Ascending aorta (tissue), 2 donors: ENCODE measurements at regions of chr1 and their contacts with region 1.

Region 1: DNA sequence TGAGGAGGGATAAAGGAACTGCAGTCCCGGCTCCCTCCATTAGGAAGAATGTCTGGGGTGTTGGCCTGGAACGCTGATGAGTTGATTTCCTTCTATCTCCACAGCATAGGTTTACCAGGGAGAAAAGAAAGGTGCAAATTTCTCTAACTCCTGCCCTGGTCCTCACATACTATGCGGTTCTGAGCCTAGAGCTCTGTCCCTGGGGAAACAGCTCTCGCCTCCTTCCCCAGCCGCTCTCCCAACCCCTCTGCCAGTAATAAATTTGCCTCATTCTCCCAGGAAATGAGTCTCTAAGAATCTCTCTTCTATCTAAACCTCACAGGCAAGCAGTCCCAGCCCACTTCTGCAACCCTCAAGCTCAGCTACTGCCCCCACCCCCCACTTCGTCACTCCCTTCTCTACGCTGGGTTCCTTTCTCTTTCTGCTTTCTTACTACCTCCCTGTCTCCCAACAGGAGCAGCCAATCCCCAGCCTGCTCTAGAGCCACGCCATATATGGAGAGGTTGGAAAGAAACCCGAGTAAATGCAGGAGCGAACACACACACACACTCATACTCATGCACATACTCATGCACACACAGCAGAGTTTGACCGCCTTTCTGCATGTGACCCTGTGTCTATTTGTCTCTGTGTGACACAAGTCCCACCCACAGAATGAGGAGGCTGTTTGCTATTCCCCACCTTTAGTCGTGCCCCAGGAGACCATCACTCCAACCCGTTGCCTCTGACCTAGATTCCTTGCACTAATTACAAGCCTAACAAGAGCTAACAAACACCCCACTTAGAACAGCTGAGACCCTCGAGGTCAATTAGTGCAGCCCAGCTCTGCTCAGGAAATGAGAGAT is 13.4 kb downstream of the PLEKHO1 start:
- DNase-seq: peak; percentile 93 to 97
- H3K4me3 ChIP-seq: peak overlapping the region; percentile 39 to 57
- H3K27ac ChIP-seq: peak overlapping the region; percentile 94 to 98
- H3K4me1 ChIP-seq: peaks cover 18 to 29% of the 10 kb centered on the region in 2 donors
- H3K27me3 ChIP-seq: no peaks in the 10 kb centered on the region
- CTCF ChIP-seq: no peak

Region 2: GRCh38 chr1:150067184-150068036 is 95.7 kb before region 1 on chr1 and contains the start of gene VPS45:
- intact Hi-C with region 1: loop called (anchors 2 kb)
- DNase-seq: peak; percentile 64 to 96
- H3K4me3 ChIP-seq: peak within 1 kb of the TSS; percentile 61 to 67
- H3K27ac ChIP-seq: peak within 1 kb of the TSS; percentile 83 to 90
- H3K4me1 ChIP-seq: peaks cover 4 to 18% of the 10 kb centered on the region in 2 donors
- H3K27me3 ChIP-seq: no peaks in the 10 kb centered on the region
- CTCF ChIP-seq: peak in 1 of 3 experiments; percentile 5
- total RNA-seq, gene VPS45: 11.3 TPM

Region 3: DNA sequence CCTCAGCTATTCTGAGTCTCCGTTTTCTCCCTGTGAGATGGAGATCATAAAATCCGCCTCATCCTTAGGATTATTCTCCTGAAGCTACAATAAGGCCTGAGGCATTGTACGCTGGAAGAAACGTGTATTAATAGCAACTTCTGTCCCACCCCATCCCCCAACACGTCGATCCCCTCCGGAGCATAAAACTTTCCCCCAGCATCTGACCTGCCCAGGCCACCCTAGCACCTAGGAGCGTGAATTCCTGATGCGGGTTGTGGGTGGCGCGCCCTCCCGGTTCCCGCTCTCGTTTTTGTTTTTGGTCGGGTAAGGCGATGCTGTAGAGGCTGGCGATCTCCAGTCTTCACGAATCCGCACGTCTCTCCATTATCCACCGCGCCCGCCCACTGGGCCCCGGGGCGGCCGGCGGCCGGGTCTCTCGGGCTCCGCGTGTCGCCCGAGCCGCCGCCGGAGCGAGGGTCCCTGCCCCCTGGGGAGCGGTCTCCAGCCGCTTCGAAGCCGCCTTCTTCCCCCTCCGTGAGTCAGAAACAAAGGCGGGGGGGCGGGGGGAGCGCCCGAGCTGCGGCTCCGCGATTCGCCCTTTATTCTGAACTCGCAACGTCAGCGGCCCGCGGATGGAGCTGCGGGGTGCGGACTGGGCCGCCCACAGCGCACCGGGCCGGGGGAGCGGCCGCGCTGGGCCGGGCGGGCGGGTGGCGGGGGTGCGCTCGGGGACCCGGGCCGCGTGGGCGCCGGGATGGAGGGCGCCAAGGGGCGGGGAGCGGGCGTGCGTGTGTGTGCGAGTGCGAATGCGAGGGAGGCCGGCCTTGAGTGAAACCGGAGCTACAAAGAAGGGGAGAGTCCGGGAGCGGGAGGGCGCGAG is 13.6 kb before region 1 on chr1 and contains the start of gene PLEKHO1:
- intact Hi-C with region 1: loop called (anchors 1 kb)
- DNase-seq: peak; percentile 80 to 96
- H3K4me3 ChIP-seq: peak within 1 kb of the TSS; percentile 94 to 95
- H3K27ac ChIP-seq: peak within 1 kb of the TSS; percentile 96 to 97
- H3K4me1 ChIP-seq: peaks cover 8 to 21% of the 10 kb centered on the region in 2 donors
- H3K27me3 ChIP-seq: no peaks in the 10 kb centered on the region
- CTCF ChIP-seq: no peak
- total RNA-seq, gene PLEKHO1: 88.9 TPM

Region 4: GRCh38 chr1:150243003-150243402 is 79.9 kb after region 1 on chr1:
- intact Hi-C with region 1: no loop called
- DNase-seq: peak in 1 of 2 donors; percentile 39
- H3K4me3 ChIP-seq: no peak overlapping the region
- H3K27ac ChIP-seq: no peak overlapping the region
- H3K4me1 ChIP-seq: no peaks in the 10 kb centered on the region
- H3K27me3 ChIP-seq: no peaks in the 10 kb centered on the region
- CTCF ChIP-seq: no peak